ENCODE measurements at regions of chr19 and their contacts with region 1.

Region 1: DNA sequence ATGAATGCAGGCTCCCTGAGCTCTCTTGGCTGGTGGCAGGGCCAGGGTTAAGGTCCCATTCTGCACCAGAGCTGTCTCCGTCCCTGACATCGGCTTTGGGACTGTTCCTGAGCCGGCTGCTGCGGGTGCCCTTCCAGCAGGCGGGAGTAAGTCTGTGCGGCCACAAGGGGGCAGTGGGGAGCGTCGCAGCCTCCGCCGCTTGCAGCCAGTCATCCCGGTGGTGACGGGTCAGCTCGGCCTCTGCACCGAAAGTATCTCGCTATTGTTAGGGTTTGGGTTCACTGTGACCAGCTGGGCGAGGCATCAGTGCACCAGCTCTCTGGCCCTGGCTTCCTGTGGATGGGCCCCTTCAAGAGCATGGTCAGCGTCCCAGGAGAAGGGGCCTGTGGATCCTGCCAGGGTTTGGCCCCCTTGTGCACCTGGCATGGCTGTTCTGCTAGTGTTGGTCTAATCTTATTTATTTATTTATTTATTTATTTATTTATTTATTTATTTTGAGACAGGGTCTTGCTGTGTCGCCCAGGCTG is 15.1 kb downstream of the NDUFB7 start:
- DNase-seq: peak; percentile 58 to 65 (median 62)
- H3K4me3 ChIP-seq: peak overlapping the region in 1 of 2 donors; percentile 18
- H3K4me3 Mint-ChIP-seq: peak overlapping the region; percentile 36 to 79 (median 60)
- H3K27ac ChIP-seq: no peak overlapping the region
- H3K27ac Mint-ChIP-seq: peak overlapping the region in 6 of 7 donors; percentile 52 to 95 (median 74)
- H3K4me1 ChIP-seq: peaks cover 45% of the 10 kb centered on the region
- H3K4me1 Mint-ChIP-seq: peaks cover 24 to 65% (median 30%) of the 10 kb centered on the region in 4 donors
- H3K27me3 ChIP-seq: no peaks in the 10 kb centered on the region
- H3K27me3 Mint-ChIP-seq: no peaks in the 10 kb centered on the region

Region 2: DNA sequence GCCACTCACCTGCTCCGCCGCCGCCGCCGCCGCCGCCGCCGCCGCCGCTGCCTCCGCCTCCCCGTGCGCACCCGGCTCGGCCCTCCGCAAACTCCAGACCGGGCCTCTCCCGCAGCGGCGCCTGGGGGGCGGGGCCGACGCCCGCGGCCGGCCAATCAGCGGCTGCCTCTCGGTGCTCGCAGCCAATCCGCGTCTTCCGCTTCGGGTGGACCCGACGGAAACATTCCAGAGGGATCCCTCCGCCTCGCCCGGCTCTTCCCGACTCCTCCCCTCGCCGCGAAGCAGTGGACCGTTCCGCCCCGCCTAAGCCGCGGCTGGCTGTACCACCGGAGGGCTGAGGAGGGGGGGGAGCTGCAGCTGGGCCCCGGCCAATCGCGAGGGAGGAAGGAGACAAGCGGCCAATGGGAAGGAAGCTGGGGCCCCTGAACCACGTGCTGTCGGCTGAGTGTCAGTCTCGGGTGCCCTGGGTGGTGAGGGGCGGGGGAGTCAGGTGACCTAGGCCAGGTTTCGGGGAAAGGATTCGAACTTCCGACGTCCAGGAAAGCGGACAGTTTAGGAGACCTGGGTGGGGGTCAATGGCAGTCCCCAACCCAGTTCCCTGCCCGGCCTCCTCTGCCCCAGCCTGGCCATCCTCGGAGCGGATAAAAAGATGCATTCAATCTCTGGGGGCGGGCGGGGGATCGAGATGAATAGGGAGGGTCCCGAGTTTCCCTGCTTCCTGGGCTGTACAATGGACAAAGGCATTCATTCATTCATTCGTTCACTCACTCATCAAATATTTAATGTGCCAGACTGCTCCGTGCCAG is 60.5 kb before region 1 on chr19 and contains the start of gene GIPC1:
- CTCF ChIA-PET with region 1: interaction called, 23 read pairs
- POLR2A ChIA-PET with region 1: interaction called, 5 read pairs
- intact Hi-C with region 1: no loop called
- DNase-seq: peak; percentile 83 to 90 (median 85)
- H3K4me3 ChIP-seq: peak within 1 kb of the TSS; percentile 42 to 56
- H3K4me3 Mint-ChIP-seq: peak within 1 kb of the TSS; percentile 84 to 92 (median 88)
- H3K27ac ChIP-seq: peak within 1 kb of the TSS; percentile 63
- H3K27ac Mint-ChIP-seq: peak within 1 kb of the TSS; percentile 84 to 96 (median 90)
- H3K4me1 ChIP-seq: peaks cover 27% of the 10 kb centered on the region
- H3K4me1 Mint-ChIP-seq: peaks cover 23 to 40% (median 29%) of the 10 kb centered on the region in 4 donors
- H3K27me3 ChIP-seq: no peaks in the 10 kb centered on the region
- H3K27me3 Mint-ChIP-seq: no peaks in the 10 kb centered on the region
- total RNA-seq, gene GIPC1: 32.3 to 33.8 TPM

Region 3: DNA sequence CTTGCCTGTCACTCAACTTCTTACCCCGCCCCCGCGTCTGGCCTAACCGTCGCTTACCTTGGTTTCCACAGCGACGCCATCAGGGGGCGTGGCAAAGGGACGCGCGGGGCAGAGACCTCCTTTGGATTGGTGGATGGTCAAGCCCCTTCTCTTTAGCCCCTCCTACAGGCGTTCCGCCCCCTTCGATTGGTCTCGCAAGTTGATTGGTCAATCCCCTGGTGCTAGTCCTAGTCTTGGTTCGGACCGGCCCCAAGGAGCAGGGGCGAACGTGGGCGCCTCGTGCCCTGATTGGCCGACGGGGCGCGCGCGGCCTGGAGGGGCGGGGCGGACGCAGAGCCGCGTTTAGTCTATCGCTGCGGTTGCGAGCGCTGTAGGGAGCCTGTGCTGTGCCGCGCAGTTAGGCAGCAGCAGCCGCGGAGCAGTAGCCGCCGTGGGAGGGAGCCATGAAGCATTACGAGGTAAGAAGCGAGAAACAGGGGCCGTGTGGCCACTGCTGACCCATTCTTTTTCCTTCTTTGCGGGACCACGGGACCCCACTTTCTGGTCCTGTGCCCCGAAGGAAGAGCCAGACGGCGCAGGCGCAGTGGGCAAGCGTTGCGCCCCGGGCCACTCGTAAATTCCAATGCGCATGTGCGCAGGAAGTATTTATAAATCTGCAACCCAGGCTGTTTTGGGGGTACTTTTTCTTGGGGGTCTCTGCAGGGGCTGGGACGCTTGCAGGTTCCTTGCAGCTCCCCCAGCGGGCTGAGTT is 27.3 kb before region 1 on chr19 and contains the start of gene TECR:
- CTCF ChIA-PET with region 1: interaction called, 30 read pairs
- POLR2A ChIA-PET with region 1: interaction called, 3 read pairs
- intact Hi-C with region 1: loop called (anchors 2 kb)
- DNase-seq: peak; percentile 100
- H3K4me3 ChIP-seq: peak within 1 kb of the TSS; percentile 99 to 100
- H3K4me3 Mint-ChIP-seq: peak within 1 kb of the TSS; percentile 89 to 96 (median 94)
- H3K27ac ChIP-seq: peak within 1 kb of the TSS; percentile 88
- H3K27ac Mint-ChIP-seq: peak within 1 kb of the TSS; percentile 98 to 100 (median 99)
- H3K4me1 ChIP-seq: peaks cover 47% of the 10 kb centered on the region
- H3K4me1 Mint-ChIP-seq: peaks cover 17 to 65% (median 44%) of the 10 kb centered on the region in 4 donors
- H3K27me3 ChIP-seq: no peaks in the 10 kb centered on the region
- H3K27me3 Mint-ChIP-seq: no peaks in the 10 kb centered on the region
- total RNA-seq, gene TECR: 189 to 194 TPM

Region 4: DNA sequence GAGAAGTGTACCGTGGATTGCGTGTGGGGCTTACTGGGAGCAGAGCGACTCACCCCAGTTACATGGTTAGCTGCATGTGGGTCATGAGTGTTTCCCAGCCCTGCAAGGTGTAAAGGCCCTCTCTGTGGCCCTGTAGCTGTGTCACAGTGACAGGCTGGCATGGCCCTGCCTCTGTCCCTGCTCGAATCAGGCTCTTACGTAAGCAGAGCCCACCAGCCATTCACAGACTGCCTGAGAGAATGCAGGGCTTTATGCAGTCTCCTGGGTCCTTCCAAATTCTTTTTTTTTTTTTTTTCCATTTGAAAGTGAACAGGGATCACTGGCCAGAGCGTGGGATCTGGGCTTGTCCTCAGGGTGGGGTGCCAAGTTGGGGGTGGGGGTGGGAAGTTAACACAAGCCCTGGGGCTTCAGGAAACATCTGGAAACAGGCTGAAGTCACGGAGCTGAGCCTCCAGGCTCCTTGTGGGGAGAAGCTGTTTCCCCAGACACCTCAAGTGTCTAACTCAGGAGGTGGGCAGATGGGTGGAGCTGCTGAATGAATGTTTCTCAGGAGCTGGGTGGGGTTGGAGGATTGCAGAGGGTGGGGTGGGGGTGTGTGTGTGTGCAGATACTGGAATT is 13.9 kb before region 1 on chr19:
- CTCF ChIA-PET with region 1: interaction called, 15 read pairs
- POLR2A ChIA-PET with region 1: interaction called, 3 read pairs
- intact Hi-C with region 1: no loop called
- DNase-seq: no peak
- H3K4me3 ChIP-seq: no peak overlapping the region
- H3K4me3 Mint-ChIP-seq: no peak overlapping the region
- H3K27ac ChIP-seq: no peak overlapping the region
- H3K27ac Mint-ChIP-seq: no peak overlapping the region
- H3K4me1 ChIP-seq: peaks cover 6% of the 10 kb centered on the region
- H3K4me1 Mint-ChIP-seq: peaks cover 10 to 57% (median 22%) of the 10 kb centered on the region in 4 donors
- H3K27me3 ChIP-seq: no peaks in the 10 kb centered on the region
- H3K27me3 Mint-ChIP-seq: no peaks in the 10 kb centered on the region

Region 5: GRCh38 chr19:14571695-14572490 is 15.2 kb after region 1 on chr19 and contains the start of gene NDUFB7:
- CTCF ChIA-PET with region 1: interaction called, 69 read pairs
- POLR2A ChIA-PET with region 1: interaction called, 4 read pairs
- intact Hi-C with region 1: no loop called
- DNase-seq: peak; percentile 91 to 93 (median 93)
- H3K4me3 ChIP-seq: peak within 1 kb of the TSS; percentile 76 to 91
- H3K4me3 Mint-ChIP-seq: peak within 1 kb of the TSS; percentile 95 to 97 (median 96)
- H3K27ac ChIP-seq: peak within 1 kb of the TSS; percentile 68
- H3K27ac Mint-ChIP-seq: peak within 1 kb of the TSS; percentile 89 to 96 (median 93)
- H3K4me1 ChIP-seq: peaks cover 33% of the 10 kb centered on the region
- H3K4me1 Mint-ChIP-seq: peaks cover 16 to 55% (median 43%) of the 10 kb centered on the region in 4 donors
- H3K27me3 ChIP-seq: no peaks in the 10 kb centered on the region
- H3K27me3 Mint-ChIP-seq: no peaks in the 10 kb centered on the region
- total RNA-seq, gene NDUFB7: 56.6 to 67.2 TPM

Measured in CD4-positive, alpha-beta memory T cell (primary cell).